ENCODE measurements at regions of chr17 and their contacts with region 1.

Region 1: GRCh38 chr17:45307290-45308015 is 9.4 kb downstream of the MAP3K14 start:
- DNase-seq: peak; percentile 78 to 93 (median 87)
- H3K4me3 ChIP-seq: peak overlapping the region in 5 of 7 experiments; percentile 23 to 53 (median 38)
- H3K27ac ChIP-seq: peak overlapping the region; percentile 76 to 89
- H3K4me1 ChIP-seq: peaks cover 34 to 66% (median 56%) of the 10 kb centered on the region in 4 experiments
- H3K27me3 ChIP-seq: no peaks in the 10 kb centered on the region

Region 2: DNA sequence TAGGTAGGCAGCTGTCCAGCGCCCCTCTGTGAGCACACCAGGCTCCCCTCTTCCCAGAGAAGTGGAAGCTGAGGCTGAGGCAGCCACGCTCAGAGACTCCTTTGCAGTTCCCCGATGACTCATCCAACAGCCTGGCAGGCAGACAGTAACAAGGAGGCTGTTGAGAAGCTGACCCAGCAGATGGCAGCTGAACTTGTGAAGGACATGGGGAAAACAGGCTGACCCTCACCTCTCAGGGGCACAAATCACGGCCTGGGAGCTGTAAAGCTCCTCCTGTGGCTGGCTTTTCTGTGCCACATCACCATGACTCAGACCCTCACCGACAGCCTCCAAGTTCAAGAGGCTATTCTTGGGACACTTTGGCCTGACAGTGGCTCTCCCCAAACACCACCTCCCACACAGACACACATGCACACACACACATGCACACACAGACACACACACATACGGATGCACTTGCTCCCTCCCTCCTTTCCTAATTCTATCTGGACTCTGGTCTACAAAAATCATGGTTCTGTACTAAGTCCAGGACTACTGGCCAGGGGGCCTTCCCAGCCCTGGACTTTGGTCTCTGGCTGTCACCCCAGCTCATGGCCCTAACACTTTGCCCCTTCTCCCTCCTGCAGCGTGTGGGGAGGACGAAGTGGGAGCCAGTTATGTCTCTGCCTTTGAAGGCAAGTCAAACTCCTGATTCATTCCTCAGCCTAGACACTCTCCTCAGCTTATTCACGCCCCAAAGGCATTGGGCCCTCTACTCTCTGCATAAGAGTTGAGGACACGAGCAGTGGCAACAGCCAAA is 13.8 kb before region 1 on chr17:
- CTCF ChIA-PET with region 1: interaction called, 28 read pairs
- POLR2A ChIA-PET with region 1: interaction called, 5 read pairs
- DNase-seq: peak in 2 of 3 donors; percentile 42 to 59
- H3K4me3 ChIP-seq: no peak overlapping the region
- H3K27ac ChIP-seq: no peak overlapping the region
- H3K4me1 ChIP-seq: peaks cover 17 to 82% (median 55%) of the 10 kb centered on the region in 4 experiments
- H3K27me3 ChIP-seq: no peaks in the 10 kb centered on the region

Region 3: GRCh38 chr17:45394913-45395568 is 87.6 kb after region 1 on chr17:
- CTCF ChIA-PET with region 1: no interaction called
- POLR2A ChIA-PET with region 1: no interaction called
- DNase-seq: peak; percentile 90 to 94 (median 91)
- H3K4me3 ChIP-seq: peak overlapping the region in 1 of 7 experiments; percentile 4
- H3K27ac ChIP-seq: no peak overlapping the region
- H3K4me1 ChIP-seq: peaks cover 0 to 24% (median 15%) of the 10 kb centered on the region in 4 experiments
- H3K27me3 ChIP-seq: no peaks in the 10 kb centered on the region

Measured in common myeloid progenitor, CD34-positive (primary cell).